T-cell (primary cell): ENCODE measurements at regions of chr2 and their contacts with region 1.

Region 1: DNA sequence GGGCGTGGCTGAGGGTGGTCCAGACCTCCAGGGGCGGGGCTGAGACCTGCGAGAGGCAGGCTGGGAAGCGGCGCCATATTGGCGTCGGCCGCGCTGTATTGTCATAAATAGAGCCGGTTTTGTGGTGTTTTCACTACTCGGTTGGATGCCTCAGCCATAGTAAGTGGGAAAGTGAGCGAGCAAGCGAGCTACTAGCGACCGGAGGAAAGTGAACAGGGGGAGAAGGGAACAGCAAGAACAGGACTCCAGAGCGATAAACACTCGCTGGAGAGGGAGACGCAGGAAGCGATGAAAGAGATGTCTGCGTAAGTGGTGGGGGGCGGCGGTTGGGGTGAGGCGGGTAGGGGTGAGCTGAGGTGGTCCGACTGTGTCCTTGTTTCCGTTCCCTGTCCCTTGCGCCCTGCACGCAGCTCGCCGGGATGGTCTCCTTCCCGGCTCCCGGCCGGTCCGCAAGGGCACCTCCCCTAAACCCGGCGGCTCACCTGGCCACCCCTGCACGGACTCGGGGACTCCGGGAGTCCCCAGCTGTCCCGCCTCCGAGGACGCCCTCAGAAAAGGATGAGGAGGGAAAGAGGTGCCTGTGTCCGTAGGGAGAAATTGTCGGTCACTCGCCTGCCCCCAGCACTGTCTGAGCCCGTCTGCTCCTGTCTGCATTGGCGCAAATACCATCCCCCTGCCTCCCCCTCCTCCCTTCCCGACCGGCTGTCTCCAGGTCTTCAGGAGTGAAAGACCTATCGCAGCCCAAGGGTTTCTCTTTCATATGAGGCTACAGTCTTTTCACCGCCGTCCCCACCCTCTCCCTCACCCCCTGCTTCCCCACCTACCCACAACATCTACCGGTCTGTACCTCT is at the start of gene PAPOLG:
- DNase-seq: peak; percentile 89 to 98 (median 96)
- ATAC-seq: peak; percentile 98 to 100 (median 99)
- H3K4me3 ChIP-seq: peak within 1 kb of the TSS; percentile 94 to 96
- H3K4me3 Mint-ChIP-seq: peak within 1 kb of the TSS; percentile 98 to 100 (median 100)
- H3K27ac ChIP-seq: peak within 1 kb of the TSS; percentile 82
- H3K27ac Mint-ChIP-seq: peak within 1 kb of the TSS; percentile 99 to 100
- H3K4me1 ChIP-seq: peaks cover 12 to 13% of the 10 kb centered on the region in 2 experiments
- H3K4me1 Mint-ChIP-seq: peaks cover 43 to 50% (median 43%) of the 10 kb centered on the region in 3 donors
- H3K27me3 ChIP-seq: peaks cover 0 to 2% of the 10 kb centered on the region in 2 experiments
- H3K27me3 Mint-ChIP-seq: no peaks in the 10 kb centered on the region
- total RNA-seq, gene PAPOLG: 20.6 to 34.8 (median 29.6) TPM

Region 2: GRCh38 chr2:60693551-60693950 is 62.9 kb before region 1 on chr2:
- CTCF ChIA-PET with region 1: no interaction called
- POLR2A ChIA-PET with region 1: no interaction called
- DNase-seq: no peak
- ATAC-seq: no peak
- H3K4me3 ChIP-seq: no peak overlapping the region
- H3K4me3 Mint-ChIP-seq: no peak overlapping the region
- H3K27ac ChIP-seq: no peak overlapping the region
- H3K27ac Mint-ChIP-seq: no peak overlapping the region
- H3K4me1 ChIP-seq: no peaks in the 10 kb centered on the region
- H3K4me1 Mint-ChIP-seq: no peaks in the 10 kb centered on the region
- H3K27me3 ChIP-seq: no peaks in the 10 kb centered on the region
- H3K27me3 Mint-ChIP-seq: peaks cover 10 to 12% of the 10 kb centered on the region in 2 donors

Region 3: GRCh38 chr2:60735496-60736250 is 20.7 kb before region 1 on chr2:
- CTCF ChIA-PET with region 1: no interaction called
- POLR2A ChIA-PET with region 1: no interaction called
- DNase-seq: peak in 33 of 35 experiments; percentile 11 to 62 (median 42)
- ATAC-seq: peak; percentile 73 to 89 (median 84)
- H3K4me3 ChIP-seq: peak overlapping the region; percentile 18 to 20
- H3K4me3 Mint-ChIP-seq: peak overlapping the region; percentile 80 to 88 (median 83)
- H3K27ac ChIP-seq: no peak overlapping the region
- H3K27ac Mint-ChIP-seq: no peak overlapping the region
- H3K4me1 ChIP-seq: no peaks in the 10 kb centered on the region
- H3K4me1 Mint-ChIP-seq: peaks cover 2 to 8% (median 7%) of the 10 kb centered on the region in 3 donors
- H3K27me3 ChIP-seq: peaks cover 0 to 26% of the 10 kb centered on the region in 2 experiments
- H3K27me3 Mint-ChIP-seq: peaks cover 25 to 37% of the 10 kb centered on the region in 2 donors

Region 4: GRCh38 chr2:60899230-60899891 is 142.9 kb after region 1 on chr2:
- CTCF ChIA-PET with region 1: no interaction called
- POLR2A ChIA-PET with region 1: interaction called in 1 of 2 experiments, 12 read pairs
- DNase-seq: peak in 1 of 35 experiments; percentile 27
- ATAC-seq: peak in 1 of 4 experiments; percentile 23
- H3K4me3 ChIP-seq: no peak overlapping the region
- H3K4me3 Mint-ChIP-seq: no peak overlapping the region
- H3K27ac ChIP-seq: no peak overlapping the region
- H3K27ac Mint-ChIP-seq: peak overlapping the region; percentile 36 to 41
- H3K4me1 ChIP-seq: peaks cover 0 to 4% of the 10 kb centered on the region in 2 experiments
- H3K4me1 Mint-ChIP-seq: peaks cover 16 to 22% (median 21%) of the 10 kb centered on the region in 3 donors
- H3K27me3 ChIP-seq: no peaks in the 10 kb centered on the region
- H3K27me3 Mint-ChIP-seq: no peaks in the 10 kb centered on the region

Region 5: DNA sequence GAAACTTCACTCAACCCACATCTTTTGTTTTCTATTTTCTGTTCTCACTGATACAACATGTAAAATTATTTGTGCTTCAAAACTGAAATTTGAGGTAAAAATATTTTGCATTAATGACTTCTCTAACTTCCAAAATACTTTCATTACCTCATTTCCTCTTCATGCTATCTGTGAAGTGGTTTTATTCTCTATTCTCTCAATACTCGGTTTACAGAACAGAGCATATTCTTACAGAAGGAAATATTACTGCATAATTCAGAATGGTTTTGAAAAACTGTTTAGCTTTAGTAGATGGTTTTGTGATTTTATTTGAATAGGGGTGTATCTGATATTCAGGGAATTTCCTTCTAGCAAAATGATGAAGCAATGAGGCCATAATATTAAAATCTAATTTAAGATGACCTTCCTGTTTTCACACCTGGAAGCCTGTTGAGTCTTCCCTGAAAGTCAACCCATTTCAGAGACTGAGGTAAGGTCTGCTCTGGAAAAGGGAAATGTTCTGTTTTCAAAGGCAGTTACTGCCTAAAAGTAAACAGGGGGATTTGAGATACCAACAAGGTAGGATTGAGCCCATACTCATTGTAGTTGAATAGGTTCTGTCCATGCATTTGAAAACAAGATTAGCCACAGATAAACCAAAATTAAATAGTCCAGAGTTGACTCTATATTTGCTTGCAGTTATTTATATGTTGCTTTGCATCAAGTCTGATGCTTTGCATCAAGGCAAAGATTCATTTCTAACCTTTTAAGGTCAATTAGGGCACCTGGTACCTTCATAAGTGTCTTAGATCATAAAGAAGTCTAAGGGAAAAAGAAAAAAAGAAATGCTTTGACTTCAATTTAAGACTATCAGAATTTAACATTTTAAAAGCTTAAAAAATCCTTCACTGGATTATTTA is 210.3 kb after region 1 on chr2:
- CTCF ChIA-PET with region 1: no interaction called
- POLR2A ChIA-PET with region 1: interaction called, 3 to 21 read pairs
- DNase-seq: peak in 1 of 35 experiments; percentile 16
- ATAC-seq: peak in 2 of 4 experiments; percentile 36 to 70
- H3K4me3 ChIP-seq: no peak overlapping the region
- H3K4me3 Mint-ChIP-seq: peak overlapping the region in 2 of 3 donors; percentile 55 to 67
- H3K27ac ChIP-seq: peak overlapping the region; percentile 77
- H3K27ac Mint-ChIP-seq: peak overlapping the region; percentile 26 to 89
- H3K4me1 ChIP-seq: peaks cover 9 to 26% of the 10 kb centered on the region in 2 experiments
- H3K4me1 Mint-ChIP-seq: peaks cover 37 to 52% (median 50%) of the 10 kb centered on the region in 3 donors
- H3K27me3 ChIP-seq: no peaks in the 10 kb centered on the region
- H3K27me3 Mint-ChIP-seq: no peaks in the 10 kb centered on the region